GM12878 (cell line): ENCODE measurements at regions of chr5 and their contacts with region 1.

Region 1: DNA sequence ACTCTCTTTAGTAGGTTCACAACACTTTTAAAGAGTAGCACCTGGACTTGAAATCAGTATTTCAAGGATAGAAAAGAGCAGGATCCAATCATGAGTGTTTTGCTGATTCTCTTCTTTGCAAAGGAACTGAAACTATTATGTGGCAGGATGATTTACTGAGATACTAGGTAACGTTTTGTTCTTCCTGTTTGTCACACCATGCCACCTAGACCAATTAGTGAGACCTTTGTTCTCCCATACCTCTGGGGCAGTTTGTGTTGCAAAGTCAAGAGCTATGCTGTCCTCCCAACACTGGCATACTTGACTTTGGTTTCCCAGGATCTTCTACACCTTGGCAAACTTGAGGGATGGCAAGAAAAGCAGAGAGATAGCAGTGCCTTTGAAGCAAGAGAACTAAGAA is 43.4 kb downstream of the PPP1R2B start:
- DNase-seq: peak; percentile 52
- ATAC-seq: peak; percentile 82
- H3K4me3 ChIP-seq: no peak overlapping the region
- H3K27ac ChIP-seq: peak overlapping the region; percentile 47; the same call in 1 of the 2 replicates
- H3K4me1 ChIP-seq: peaks cover 23% of the 10 kb centered on the region
- H3K27me3 ChIP-seq: no peaks in the 10 kb centered on the region
- CTCF ChIP-seq: no peak
- EP300 ChIP-seq: peak in 1 of 2 experiments; percentile 51; a peak in 1 of 4 replicates
- POLR2A ChIP-seq: no peak
- RAD21 ChIP-seq: no peak

Region 2: DNA sequence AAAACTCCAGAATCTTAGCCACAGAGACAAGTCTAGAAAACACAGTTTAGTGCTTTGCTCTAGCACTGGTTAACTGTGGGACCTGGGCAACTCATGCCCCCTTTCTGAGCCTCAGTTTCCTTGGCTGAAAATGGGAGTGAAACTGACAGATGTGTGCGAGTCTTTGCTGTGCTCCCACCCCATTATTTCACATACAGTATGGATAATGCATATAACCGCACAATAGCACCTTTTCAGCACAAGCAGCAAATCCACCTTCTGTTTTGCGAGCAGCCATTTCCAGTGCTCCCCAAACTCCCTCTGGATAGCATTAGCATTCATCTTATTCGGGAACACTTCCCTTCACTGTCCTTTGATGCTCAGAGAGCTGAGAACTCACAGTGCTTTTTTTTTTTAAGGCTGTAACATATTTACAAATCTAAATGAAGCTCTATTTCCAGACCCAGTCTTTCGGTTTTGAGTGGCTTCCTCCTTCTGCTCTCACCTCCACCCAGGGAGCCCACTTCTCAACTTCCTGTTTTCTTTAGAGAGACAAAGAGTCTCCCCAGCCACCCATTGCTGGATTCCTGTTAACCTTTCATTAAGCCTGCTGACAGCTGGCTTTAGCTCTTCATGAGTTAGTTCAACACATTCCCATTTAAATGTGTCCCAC is 20.3 kb after region 1 on chr5:
- CTCF ChIA-PET with region 1: interaction called, 26 read pairs
- POLR2A ChIA-PET with region 1: interaction called, 11 read pairs
- RAD21 ChIA-PET with region 1: interaction called, 218 read pairs
- SMC1A ChIA-PET with region 1: interaction called, 104 read pairs
- in situ Hi-C with region 1: no loop called
- intact Hi-C with region 1: no loop called
- DNase-seq: peak; percentile 68
- ATAC-seq: peak; percentile 87
- H3K4me3 ChIP-seq: peak overlapping the region; percentile 46; the same call in 1 of the 2 replicates
- H3K27ac ChIP-seq: peak overlapping the region; percentile 89
- H3K4me1 ChIP-seq: peaks cover 17% of the 10 kb centered on the region
- H3K27me3 ChIP-seq: no peaks in the 10 kb centered on the region
- CTCF ChIP-seq: no peak
- EP300 ChIP-seq: no peak
- POLR2A ChIP-seq: no peak
- RAD21 ChIP-seq: no peak